ENCODE measurements at regions of chr9 and their contacts with region 1.

Region 1: GRCh38 chr9:72827950-72828731 is 124.7 kb downstream of the ALDH1A1 start:
- DNase-seq: no peak

Region 2: GRCh38 chr9:72038890-72039410 is 789.2 kb before region 1 on chr9:
- intact Hi-C with region 1: loop called (anchors 10 kb)
- DNase-seq: peak; percentile 35 to 94 (median 85)

Region 3: DNA sequence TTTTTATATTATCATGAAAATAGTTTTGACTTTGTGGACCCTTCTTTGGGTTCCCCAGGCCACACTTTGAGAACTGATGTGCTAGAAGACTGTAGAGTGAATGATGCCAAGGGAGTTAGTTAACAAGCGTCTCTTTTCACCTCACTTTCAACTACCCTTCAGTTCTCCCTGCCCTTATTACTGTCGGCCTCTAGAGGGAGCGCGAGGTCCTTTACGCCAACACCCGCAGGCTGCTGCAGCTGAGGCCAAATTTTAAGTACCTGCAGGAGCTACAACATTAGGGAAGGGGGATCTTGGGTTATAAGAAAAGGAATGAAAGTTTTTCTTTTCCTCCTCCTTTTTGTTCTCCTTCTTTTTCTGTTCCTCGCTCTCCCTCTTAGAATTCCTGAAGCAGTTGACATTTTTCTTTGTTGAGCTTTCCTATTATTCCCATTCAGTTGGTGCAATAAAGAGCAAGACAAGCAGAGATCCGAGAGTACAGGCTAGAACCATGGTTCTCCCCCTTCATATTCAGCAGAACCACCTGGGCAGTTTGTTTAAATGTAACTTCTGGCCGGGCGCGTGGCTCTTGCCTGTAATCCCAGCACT is 547.1 kb before region 1 on chr9:
- intact Hi-C with region 1: loop called (anchors 5 kb)
- DNase-seq: peak; percentile 59 to 91 (median 82)

Region 4: GRCh38 chr9:72894342-72894741 is 66.2 kb after region 1 on chr9:
- intact Hi-C with region 1: no loop called
- DNase-seq: no peak